Activated CD4-positive, alpha-beta T cell treated with anti-CD3 and anti-CD28 coated beads, Interleukin-2, amount 10 ng/mL, durations not matched to agents 7 days and 5 days (primary cell): ENCODE measurements at regions of chr17 and their contacts with region 1.

Region 1: GRCh38 chr17:78818932-78819331 is 21.7 kb downstream of the USP36 start:
- DNase-seq: peak; percentile 80
- H3K4me3 Mint-ChIP-seq: peak overlapping the region; percentile 65
- H3K27ac Mint-ChIP-seq: peak overlapping the region; percentile 91
- H3K4me1 Mint-ChIP-seq: peaks cover 66% of the 10 kb centered on the region
- H3K27me3 Mint-ChIP-seq: no peaks in the 10 kb centered on the region

Region 2: DNA sequence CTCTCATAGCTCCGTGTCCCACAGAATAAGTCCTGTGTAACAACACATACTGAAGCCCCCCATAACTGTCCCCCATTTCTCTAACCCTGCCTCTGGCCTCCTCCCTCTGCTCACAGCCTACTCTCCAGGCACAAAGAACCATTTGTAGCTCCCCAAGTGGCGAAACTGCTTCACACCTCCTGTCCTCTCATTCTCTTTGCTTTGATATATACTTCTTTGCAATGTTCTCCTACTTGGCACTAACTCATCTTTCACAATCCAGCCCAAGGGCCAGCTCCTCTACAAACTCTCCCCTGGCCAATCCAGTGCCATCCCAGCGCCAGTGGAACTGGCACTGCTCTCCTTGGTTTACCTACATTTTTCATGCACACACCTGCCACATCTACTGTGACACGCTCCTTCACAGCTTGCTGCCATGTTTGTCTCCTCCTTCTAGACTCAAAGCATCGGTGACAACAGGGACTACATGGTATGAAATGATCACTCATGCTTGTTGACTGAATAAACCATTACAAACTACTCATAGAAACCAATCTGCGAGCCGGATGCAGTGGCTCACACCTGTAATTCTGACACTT is 49.6 kb before region 1 on chr17:
- CTCF ChIA-PET with region 1: no interaction called
- POLR2A ChIA-PET with region 1: no interaction called
- DNase-seq: no peak
- H3K4me3 Mint-ChIP-seq: no peak overlapping the region
- H3K27ac Mint-ChIP-seq: no peak overlapping the region
- H3K4me1 Mint-ChIP-seq: peaks cover 44% of the 10 kb centered on the region
- H3K27me3 Mint-ChIP-seq: no peaks in the 10 kb centered on the region

Region 3: DNA sequence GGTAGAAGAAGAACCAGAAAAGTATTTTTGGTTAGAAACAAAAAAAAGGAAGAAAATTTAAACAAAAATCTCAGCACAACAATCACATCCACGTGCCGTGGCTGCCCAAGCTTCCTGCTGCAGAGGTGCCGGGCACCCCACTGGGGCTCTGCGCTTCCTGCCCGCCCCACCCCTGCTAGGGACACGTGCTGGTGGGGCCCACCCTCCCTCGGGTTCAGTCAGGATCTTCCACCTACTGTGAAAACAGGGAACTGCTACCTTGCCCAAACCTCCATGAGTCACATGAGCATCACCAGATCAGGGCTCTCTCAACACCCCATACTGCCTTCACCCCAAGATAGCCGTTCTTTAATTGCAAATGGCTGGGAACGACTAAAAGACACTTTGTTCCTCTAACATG is 12.5 kb before region 1 on chr17:
- CTCF ChIA-PET with region 1: interaction called, 16 read pairs
- POLR2A ChIA-PET with region 1: interaction called, 8 read pairs
- DNase-seq: peak; percentile 74
- H3K4me3 Mint-ChIP-seq: peak overlapping the region; percentile 28
- H3K27ac Mint-ChIP-seq: peak overlapping the region; percentile 90
- H3K4me1 Mint-ChIP-seq: peaks cover 64% of the 10 kb centered on the region
- H3K27me3 Mint-ChIP-seq: no peaks in the 10 kb centered on the region